IMR-90 (cell line): ENCODE measurements at regions of chr2 and their contacts with region 1.

Region 1: DNA sequence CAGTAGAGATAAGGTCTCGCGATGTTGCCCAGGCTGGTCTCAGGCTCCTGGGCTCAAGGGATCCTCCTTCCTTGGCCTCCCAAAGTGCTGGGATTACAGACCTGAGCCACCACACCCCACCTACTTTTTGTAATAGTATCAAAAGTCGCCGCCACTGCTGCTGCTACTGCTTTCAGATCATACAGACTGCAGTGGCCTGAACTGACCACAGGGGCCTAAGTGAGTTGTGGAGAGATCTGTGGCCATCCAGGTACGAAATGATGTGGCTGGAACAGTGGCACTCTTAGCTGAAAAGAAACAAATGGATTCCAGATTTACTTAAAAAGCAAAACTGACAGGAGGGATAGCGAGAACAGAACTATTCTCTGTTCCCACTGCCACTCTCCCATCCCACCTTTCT is 32.9 kb upstream of the POMC start:
- DNase-seq: no peak
- ATAC-seq: peak; percentile 48; the same call in 1 of the 2 replicates
- H3K4me3 ChIP-seq: no peak overlapping the region
- H3K27ac ChIP-seq: no peak overlapping the region
- H3K4me1 ChIP-seq: peaks cover 1% of the 10 kb centered on the region; the same call in 1 of the 2 replicates
- H3K27me3 ChIP-seq: no peaks in the 10 kb centered on the region; the same call in 1 of the 2 replicates
- CTCF ChIP-seq: 0 out of 2 replicates have a peak, but pooled peaks have one; percentile 18
- POLR2A ChIP-seq: no peak
- RAD21 ChIP-seq: no peak

Region 2: DNA sequence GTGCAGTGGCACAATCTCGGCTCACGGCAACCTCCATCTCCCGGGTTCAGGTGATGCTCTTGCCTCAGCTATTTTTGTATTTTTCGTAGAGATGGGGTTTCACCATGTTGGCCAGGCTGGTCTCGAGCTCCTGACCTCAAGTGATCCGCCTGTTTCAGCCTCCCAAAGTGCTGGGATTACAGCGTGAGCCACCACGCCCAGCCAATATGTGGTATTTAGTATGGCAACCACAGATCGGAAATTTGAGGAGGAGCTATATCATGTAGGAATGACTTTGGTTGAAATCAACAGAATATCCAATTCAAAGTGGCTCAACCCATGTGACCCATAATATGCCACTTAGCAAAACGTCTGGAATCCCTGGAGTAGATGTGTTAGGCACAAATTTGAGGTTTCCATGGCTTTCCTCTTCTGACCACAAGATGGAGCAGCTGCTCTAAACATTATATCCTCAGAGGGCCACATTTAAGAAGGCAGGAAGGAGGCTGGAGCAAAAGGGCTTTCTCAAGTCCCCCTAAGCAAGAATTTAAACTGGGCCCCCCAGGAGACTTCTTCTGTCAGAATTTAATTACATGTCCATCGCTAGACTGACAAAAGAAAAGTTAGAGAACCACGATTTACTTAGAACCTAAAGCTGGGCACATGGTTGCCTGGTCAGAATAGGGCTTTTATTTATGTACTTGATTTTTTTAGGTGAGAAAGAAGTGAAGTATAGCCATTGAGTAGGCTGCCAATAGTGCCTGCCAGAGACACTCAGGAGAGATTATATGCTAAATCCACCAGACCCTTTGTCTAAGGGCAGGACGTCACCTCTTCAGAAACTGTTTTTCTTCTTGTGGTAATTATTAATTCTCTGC is 791.3 kb before region 1 on chr2:
- CTCF ChIA-PET with region 1: no interaction called
- POLR2A ChIA-PET with region 1: no interaction called
- dilution Hi-C with region 1: no loop called
- in situ Hi-C with region 1: no loop called
- intact Hi-C with region 1: loop called (anchors 1 kb)
- DNase-seq: peak; percentile 74
- ATAC-seq: peak; percentile 91
- H3K4me3 ChIP-seq: no peak overlapping the region
- H3K27ac ChIP-seq: no peak overlapping the region
- H3K4me1 ChIP-seq: no peaks in the 10 kb centered on the region
- H3K27me3 ChIP-seq: peaks cover 2% of the 10 kb centered on the region
- CTCF ChIP-seq: peak; percentile 86
- POLR2A ChIP-seq: no peak
- RAD21 ChIP-seq: peak; percentile 86

Region 3: GRCh38 chr2:24863641-24864040 is 337.6 kb before region 1 on chr2:
- CTCF ChIA-PET with region 1: no interaction called
- POLR2A ChIA-PET with region 1: no interaction called
- dilution Hi-C with region 1: no loop called
- in situ Hi-C with region 1: no loop called
- intact Hi-C with region 1: loop called (anchors 10 kb)
- DNase-seq: peak; percentile 75
- ATAC-seq: peak; percentile 88
- H3K4me3 ChIP-seq: no peak overlapping the region
- H3K27ac ChIP-seq: no peak overlapping the region
- H3K4me1 ChIP-seq: no peaks in the 10 kb centered on the region
- H3K27me3 ChIP-seq: no peaks in the 10 kb centered on the region
- CTCF ChIP-seq: peak; percentile 34; the same call in 1 of the 2 replicates
- POLR2A ChIP-seq: no peak
- RAD21 ChIP-seq: peak; percentile 45

Region 4: DNA sequence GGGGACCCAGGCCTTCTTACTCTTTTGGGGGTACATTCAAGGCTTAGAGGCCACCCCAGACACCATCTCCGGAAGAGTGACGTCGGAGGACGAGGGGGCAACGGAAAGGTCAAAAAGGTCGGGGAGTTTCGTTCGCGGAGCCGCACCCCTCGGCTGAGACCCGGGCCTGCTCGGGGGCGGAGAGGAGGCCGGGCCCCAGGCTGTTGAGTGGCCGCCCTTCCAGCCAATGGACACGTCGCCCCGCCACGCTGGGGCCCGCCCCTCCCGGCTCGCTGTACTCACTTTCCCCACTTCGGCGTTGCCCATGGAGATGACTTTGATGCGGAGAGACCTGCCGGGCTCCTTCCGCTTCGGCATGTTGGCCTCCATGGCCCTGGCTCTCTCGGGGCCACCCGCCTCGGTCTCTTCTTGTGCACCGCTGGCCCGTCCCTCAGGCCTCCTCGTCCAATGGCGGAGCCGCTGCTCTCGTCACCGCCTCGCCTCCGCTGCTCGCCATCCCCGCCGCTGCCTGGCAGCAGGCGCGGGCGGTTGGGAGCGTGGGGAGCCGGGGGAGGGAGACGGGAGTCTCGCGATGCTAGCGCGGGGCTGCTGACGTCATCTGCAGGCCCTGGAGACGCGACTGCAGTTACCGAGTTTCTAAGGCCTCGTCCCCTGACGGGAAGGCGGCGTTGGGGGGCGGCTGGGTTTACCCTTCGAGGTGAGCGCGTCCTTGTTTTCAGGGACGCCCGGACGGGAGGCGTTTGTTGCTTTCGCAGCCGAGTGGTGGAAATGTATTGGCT is 229.5 kb before region 1 on chr2 and contains the start of gene DNAJC27:
- CTCF ChIA-PET with region 1: interaction called, 16 read pairs
- POLR2A ChIA-PET with region 1: no interaction called
- dilution Hi-C with region 1: no loop called
- in situ Hi-C with region 1: no loop called
- intact Hi-C with region 1: loop called (anchors 1 kb)
- DNase-seq: peak; percentile 98
- ATAC-seq: peak; percentile 97
- H3K4me3 ChIP-seq: peak within 1 kb of the TSS; percentile 72
- H3K27ac ChIP-seq: peak within 1 kb of the TSS; percentile 96
- H3K4me1 ChIP-seq: no peaks in the 10 kb centered on the region
- H3K27me3 ChIP-seq: no peaks in the 10 kb centered on the region
- CTCF ChIP-seq: no peak
- POLR2A ChIP-seq: peak; percentile 97
- RAD21 ChIP-seq: no peak
- total RNA-seq, gene DNAJC27: 2.0 and 2.8 TPM in 2 replicates

Region 5: DNA sequence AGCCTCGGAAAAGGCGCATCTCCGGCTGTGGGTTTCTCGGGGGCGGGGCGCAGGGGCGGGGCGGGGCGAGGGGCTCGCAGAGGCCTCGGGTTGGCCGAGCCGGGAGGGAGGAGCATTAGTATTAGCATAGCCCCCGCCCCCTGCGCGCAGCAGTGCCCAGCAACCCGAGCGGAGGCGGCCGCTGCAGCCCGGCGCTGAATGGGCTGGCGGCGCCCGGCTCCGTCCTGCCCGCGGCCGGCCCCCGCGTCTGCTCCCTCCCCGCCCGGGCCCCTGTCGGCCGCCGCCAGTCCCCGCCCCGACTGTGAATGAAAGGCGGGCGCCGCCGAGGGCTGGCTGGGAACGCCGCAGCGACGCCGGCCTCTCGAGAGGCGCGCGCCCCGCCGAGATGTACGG is 159.3 kb before region 1 on chr2 and contains the start of gene EFR3B:
- CTCF ChIA-PET with region 1: no interaction called
- POLR2A ChIA-PET with region 1: no interaction called
- dilution Hi-C with region 1: no loop called
- in situ Hi-C with region 1: no loop called
- intact Hi-C with region 1: loop called (anchors 5 kb)
- DNase-seq: peak; percentile 90
- ATAC-seq: peak; percentile 99
- H3K4me3 ChIP-seq: peak within 1 kb of the TSS; percentile 51
- H3K27ac ChIP-seq: no peak within 1 kb of the TSS
- H3K4me1 ChIP-seq: peaks cover 10% of the 10 kb centered on the region
- H3K27me3 ChIP-seq: peaks cover 16% of the 10 kb centered on the region
- CTCF ChIP-seq: no peak
- POLR2A ChIP-seq: peak; percentile 40; the same call in 1 of the 2 replicates
- RAD21 ChIP-seq: no peak
- total RNA-seq, gene EFR3B: 0.90 and 1.1 TPM in 2 replicates

Region 6: GRCh38 chr2:25331686-25332365 is 130.6 kb after region 1 on chr2:
- CTCF ChIA-PET with region 1: no interaction called
- POLR2A ChIA-PET with region 1: no interaction called
- dilution Hi-C with region 1: no loop called
- in situ Hi-C with region 1: no loop called
- intact Hi-C with region 1: no loop called
- DNase-seq: peak; percentile 34
- ATAC-seq: 0 out of 2 replicates have a peak, but pooled peaks have one; percentile 24
- H3K4me3 ChIP-seq: no peak overlapping the region
- H3K27ac ChIP-seq: no peak overlapping the region
- H3K4me1 ChIP-seq: no peaks in the 10 kb centered on the region; the same call in 1 of the 2 replicates
- H3K27me3 ChIP-seq: no peaks in the 10 kb centered on the region
- CTCF ChIP-seq: no peak
- POLR2A ChIP-seq: no peak
- RAD21 ChIP-seq: no peak